OCI-LY7 (cell line): ENCODE measurements at regions of chr11 and their contacts with region 1.

Region 1: DNA sequence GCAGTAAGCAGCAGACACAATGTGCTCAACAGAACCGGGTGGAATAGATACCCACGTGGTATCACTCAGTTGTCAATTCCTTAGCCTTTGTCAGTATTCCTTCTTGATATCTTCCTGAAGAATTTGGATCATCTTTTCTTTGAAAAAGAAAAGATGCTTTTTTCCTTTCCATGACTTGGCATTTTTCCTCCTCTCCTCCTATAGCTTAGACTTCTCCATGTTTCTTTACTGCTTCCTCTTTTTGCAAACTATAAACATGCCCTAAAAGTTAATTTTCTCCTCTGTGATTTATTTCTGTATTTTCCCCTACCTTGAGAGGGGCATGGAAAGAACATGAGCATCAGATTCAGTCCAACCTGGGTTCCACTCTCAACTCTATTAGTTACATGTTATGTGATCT is 11.7 kb downstream of the CBLIF start:
- DNase-seq: no peak
- H3K4me3 ChIP-seq: no peak overlapping the region
- H3K27ac ChIP-seq: no peak overlapping the region
- H3K4me1 ChIP-seq: no peaks in the 10 kb centered on the region
- CTCF ChIP-seq: no peak

Region 2: GRCh38 chr11:58711832-58712231 is 1121.8 kb before region 1 on chr11:
- CTCF ChIA-PET with region 1: no interaction called
- POLR2A ChIA-PET with region 1: no interaction called
- intact Hi-C with region 1: no loop called
- DNase-seq: no peak
- H3K4me3 ChIP-seq: no peak overlapping the region
- H3K27ac ChIP-seq: no peak overlapping the region
- H3K4me1 ChIP-seq: no peaks in the 10 kb centered on the region
- CTCF ChIP-seq: no peak

Region 3: DNA sequence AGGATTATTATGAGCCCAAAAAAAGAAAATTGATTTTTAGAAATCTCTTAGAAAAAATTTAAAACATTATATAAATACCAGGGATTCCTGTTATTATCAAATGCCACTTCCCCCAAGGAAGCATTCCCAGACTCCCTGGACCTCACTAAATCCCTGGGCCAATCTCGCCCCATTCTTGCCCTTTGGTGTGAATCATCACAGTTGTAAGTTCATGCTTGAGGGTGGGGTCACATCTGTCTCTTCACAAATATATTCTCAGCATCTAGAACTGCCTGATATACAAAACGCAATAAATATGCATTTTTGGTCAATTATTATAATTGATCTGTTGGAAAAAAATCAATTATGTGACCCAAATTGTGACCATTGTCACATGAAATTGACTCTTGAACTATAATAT is 385.1 kb before region 1 on chr11:
- CTCF ChIA-PET with region 1: no interaction called
- POLR2A ChIA-PET with region 1: no interaction called
- intact Hi-C with region 1: no loop called
- DNase-seq: no peak
- H3K4me3 ChIP-seq: no peak overlapping the region
- H3K27ac ChIP-seq: no peak overlapping the region
- H3K4me1 ChIP-seq: no peaks in the 10 kb centered on the region
- CTCF ChIP-seq: no peak

Region 4: DNA sequence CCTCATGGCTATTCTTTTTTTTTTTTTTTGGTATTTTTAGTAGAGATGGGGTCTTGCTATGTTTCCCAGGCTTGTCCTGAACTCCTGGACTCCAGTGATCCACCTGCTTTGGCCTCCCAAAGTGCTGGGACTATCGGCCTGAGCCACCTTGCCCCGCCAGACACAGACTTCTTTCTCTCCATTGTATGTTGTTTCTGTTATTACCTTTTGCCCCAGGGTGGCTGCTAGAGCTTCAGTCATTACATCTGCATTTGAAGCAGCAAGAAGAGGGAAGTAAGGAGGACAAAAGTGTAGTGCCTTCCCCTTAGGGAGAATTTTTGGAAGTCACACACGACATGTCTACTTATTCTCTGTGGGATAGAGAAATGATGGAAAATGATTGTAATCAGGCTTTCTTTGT is 207.9 kb before region 1 on chr11:
- CTCF ChIA-PET with region 1: no interaction called
- POLR2A ChIA-PET with region 1: no interaction called
- intact Hi-C with region 1: no loop called
- DNase-seq: no peak
- H3K4me3 ChIP-seq: no peak overlapping the region
- H3K27ac ChIP-seq: no peak overlapping the region
- H3K4me1 ChIP-seq: no peaks in the 10 kb centered on the region
- CTCF ChIP-seq: no peak

Region 5: DNA sequence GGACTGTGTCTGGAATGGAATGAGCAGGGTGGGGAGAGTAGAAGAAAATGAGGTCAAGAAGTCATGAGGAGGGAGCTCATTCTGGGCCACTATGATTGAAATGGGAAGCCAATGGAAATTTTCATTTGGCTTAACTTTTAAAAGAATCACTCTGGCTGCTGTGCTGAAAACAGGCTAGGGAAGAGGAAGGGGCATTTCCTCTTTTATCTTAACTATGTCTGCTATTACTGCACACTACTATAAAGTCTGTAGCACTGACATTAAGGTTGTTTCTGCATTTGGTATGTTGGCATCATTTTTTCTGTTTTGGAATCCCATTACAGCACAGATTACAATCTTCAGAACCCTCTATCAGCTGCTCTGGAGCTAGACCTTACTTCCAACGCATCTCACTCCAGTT is 173.0 kb before region 1 on chr11:
- CTCF ChIA-PET with region 1: no interaction called
- POLR2A ChIA-PET with region 1: no interaction called
- intact Hi-C with region 1: no loop called
- DNase-seq: no peak
- H3K4me3 ChIP-seq: no peak overlapping the region
- H3K27ac ChIP-seq: no peak overlapping the region
- H3K4me1 ChIP-seq: peaks cover 10% of the 10 kb centered on the region
- CTCF ChIP-seq: no peak

Region 6: GRCh38 chr11:59901306-59901705 is 67.7 kb after region 1 on chr11:
- CTCF ChIA-PET with region 1: no interaction called
- POLR2A ChIA-PET with region 1: no interaction called
- intact Hi-C with region 1: loop called (anchors 5 kb)
- DNase-seq: no peak
- H3K4me3 ChIP-seq: no peak overlapping the region
- H3K27ac ChIP-seq: no peak overlapping the region
- H3K4me1 ChIP-seq: no peaks in the 10 kb centered on the region
- CTCF ChIP-seq: no peak